Breast epithelium (tissue), 4 donors: ENCODE measurements at regions of chr6 and their contacts with region 1.

Region 1: DNA sequence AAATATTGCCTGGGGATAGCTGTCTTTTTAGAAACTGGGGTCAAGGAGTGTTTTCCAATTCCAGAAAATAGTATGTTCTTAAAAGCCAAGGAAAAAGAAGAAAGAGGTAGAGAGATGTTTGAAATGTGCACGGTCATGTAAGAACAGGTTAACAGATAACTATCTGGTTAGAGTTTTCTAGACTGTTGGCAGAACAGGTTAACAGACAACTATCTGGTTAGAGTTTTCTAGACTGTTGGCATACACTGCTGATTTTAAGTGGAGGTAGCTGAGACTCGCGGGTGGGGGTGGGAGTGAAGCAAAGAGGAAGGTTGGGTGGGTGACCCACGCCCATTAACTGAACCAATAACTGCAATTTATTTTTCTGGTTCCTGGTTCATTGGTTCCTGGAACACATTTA is 157.5 kb downstream of the ELOVL4 start:
- DNase-seq: no peak
- H3K4me3 ChIP-seq: no peak overlapping the region
- H3K27ac ChIP-seq: no peak overlapping the region
- H3K4me1 ChIP-seq: no peaks in the 10 kb centered on the region
- H3K27me3 ChIP-seq: no peaks in the 10 kb centered on the region
- CTCF ChIP-seq: no peak
- POLR2A ChIP-seq: no peak

Region 2: GRCh38 chr6:79810185-79810705 is 20.4 kb after region 1 on chr6:
- intact Hi-C with region 1: loop called (anchors 1 kb)
- DNase-seq: no peak
- H3K4me3 ChIP-seq: no peak overlapping the region
- H3K27ac ChIP-seq: no peak overlapping the region
- H3K4me1 ChIP-seq: no peaks in the 10 kb centered on the region
- H3K27me3 ChIP-seq: no peaks in the 10 kb centered on the region
- CTCF ChIP-seq: no peak
- POLR2A ChIP-seq: no peak

Region 3: GRCh38 chr6:81138236-81138635 is 1348.4 kb after region 1 on chr6:
- intact Hi-C with region 1: no loop called
- DNase-seq: no peak
- H3K4me3 ChIP-seq: no peak overlapping the region
- H3K27ac ChIP-seq: no peak overlapping the region
- H3K4me1 ChIP-seq: no peaks in the 10 kb centered on the region
- H3K27me3 ChIP-seq: no peaks in the 10 kb centered on the region
- CTCF ChIP-seq: no peak
- POLR2A ChIP-seq: no peak